PC-3 (cell line): ENCODE measurements at regions of chr3 and their contacts with region 1.

Region 1: GRCh38 chr3:45656575-45657363 is 32.4 kb upstream of the SACM1L start:
- DNase-seq: peak; percentile 97
- ATAC-seq: peak; percentile 76
- H3K4me3 ChIP-seq: no peak overlapping the region
- H3K27ac ChIP-seq: peak overlapping the region; percentile 49
- H3K4me1 ChIP-seq: peaks cover 38% of the 10 kb centered on the region
- H3K27me3 ChIP-seq: no peaks in the 10 kb centered on the region
- CTCF ChIP-seq: peak; percentile 94

Region 2: DNA sequence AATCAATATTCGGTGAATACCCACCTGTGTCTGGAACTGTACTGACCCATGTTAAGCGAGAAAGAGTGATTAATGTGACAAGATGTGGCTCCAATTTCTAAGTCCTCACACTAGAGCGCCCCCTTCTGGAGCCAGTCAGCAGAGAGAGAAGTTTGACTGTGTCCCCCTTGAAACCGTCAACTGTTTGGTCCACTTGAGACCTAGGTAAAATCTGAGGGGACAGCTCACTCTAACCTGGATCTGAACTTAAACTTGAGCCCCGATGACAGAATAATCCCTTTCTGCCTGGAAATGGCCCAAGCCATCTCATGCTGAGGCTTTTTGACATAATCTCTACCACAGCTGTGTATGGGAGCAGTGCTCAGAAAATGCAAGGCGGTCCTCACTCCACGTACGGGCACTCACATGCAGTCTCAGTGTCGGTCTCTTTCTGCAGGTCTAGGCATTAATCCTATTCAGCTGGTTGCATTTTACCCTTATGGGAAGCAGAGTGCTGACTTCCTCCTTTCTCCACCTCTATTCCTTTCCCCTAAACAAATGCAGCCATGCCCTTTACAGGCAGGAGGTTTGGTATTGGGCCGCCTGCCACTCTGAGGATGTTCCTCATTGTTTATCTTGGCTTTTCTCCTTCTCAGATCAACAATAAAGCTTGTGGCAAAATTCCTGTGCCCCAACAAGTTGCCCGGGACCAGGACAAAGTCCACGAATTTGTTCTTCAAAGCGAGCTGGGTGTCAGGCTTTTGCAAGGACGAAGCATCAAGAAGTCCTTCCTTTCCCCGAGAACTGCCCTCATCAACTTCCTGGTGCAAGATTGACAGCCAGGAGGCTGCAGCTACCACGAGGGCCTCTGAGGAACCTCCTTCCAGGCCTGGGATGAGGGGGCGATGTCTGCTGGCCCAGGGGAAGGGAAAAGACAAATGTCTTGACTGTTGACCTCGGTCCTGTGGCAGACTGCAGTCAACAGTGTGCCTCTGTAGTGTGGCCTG is 109.8 kb before region 1 on chr3:
- CTCF ChIA-PET with region 1: interaction called, 8 read pairs
- POLR2A ChIA-PET with region 1: interaction called, 5 read pairs
- intact Hi-C with region 1: loop called (anchors 2 kb)
- DNase-seq: peak; percentile 71
- ATAC-seq: peak; percentile 57
- H3K4me3 ChIP-seq: no peak overlapping the region
- H3K27ac ChIP-seq: peak overlapping the region; percentile 47
- H3K4me1 ChIP-seq: peaks cover 45% of the 10 kb centered on the region
- H3K27me3 ChIP-seq: no peaks in the 10 kb centered on the region
- CTCF ChIP-seq: peak; percentile 74

Region 3: DNA sequence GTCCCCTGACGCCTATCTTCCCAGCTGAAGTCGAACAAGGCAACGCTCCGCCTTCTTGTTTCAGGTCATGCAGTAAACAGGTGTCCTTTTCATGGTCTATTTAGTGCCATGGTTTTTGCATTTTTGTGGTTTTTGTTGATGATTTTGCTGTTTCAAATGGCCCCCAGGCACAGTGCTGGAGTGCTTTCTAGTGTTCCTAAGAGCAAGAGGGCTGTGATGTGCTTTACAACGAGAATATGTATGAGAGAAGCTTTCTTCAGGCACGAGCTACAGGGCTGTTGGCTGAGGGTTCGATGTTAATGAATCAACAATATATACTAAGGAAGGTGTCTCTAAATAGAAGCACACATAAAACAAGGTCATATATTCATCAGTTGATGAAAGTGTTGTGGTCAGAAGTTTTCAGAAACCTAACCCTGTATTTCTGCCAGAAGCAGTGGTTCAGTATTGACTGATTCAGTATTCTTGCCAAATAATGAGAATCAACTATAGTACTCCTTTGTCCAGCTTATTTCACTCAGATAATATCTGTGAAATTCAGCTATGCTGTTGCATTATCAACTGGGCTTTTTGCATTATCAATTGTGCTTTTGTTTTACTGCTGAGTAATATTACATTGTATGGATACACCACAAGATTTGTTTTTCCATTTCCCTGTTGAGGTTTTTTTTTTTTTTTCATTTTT is 43.7 kb before region 1 on chr3:
- CTCF ChIA-PET with region 1: interaction called, 7 read pairs
- POLR2A ChIA-PET with region 1: interaction called, 8 read pairs
- intact Hi-C with region 1: loop called (anchors 1 kb)
- DNase-seq: peak; percentile 70
- ATAC-seq: peak; percentile 39
- H3K4me3 ChIP-seq: no peak overlapping the region
- H3K27ac ChIP-seq: peak overlapping the region; percentile 42
- H3K4me1 ChIP-seq: peaks cover 46% of the 10 kb centered on the region
- H3K27me3 ChIP-seq: no peaks in the 10 kb centered on the region
- CTCF ChIP-seq: no peak

Region 4: GRCh38 chr3:45715945-45716344 is 59.2 kb after region 1 on chr3:
- CTCF ChIA-PET with region 1: no interaction called
- POLR2A ChIA-PET with region 1: no interaction called
- intact Hi-C with region 1: no loop called
- DNase-seq: no peak
- ATAC-seq: no peak
- H3K4me3 ChIP-seq: no peak overlapping the region
- H3K27ac ChIP-seq: no peak overlapping the region
- H3K4me1 ChIP-seq: no peaks in the 10 kb centered on the region
- H3K27me3 ChIP-seq: no peaks in the 10 kb centered on the region
- CTCF ChIP-seq: no peak